H1 (cell line): ENCODE measurements at regions of chr2 and their contacts with region 1.

Region 1: DNA sequence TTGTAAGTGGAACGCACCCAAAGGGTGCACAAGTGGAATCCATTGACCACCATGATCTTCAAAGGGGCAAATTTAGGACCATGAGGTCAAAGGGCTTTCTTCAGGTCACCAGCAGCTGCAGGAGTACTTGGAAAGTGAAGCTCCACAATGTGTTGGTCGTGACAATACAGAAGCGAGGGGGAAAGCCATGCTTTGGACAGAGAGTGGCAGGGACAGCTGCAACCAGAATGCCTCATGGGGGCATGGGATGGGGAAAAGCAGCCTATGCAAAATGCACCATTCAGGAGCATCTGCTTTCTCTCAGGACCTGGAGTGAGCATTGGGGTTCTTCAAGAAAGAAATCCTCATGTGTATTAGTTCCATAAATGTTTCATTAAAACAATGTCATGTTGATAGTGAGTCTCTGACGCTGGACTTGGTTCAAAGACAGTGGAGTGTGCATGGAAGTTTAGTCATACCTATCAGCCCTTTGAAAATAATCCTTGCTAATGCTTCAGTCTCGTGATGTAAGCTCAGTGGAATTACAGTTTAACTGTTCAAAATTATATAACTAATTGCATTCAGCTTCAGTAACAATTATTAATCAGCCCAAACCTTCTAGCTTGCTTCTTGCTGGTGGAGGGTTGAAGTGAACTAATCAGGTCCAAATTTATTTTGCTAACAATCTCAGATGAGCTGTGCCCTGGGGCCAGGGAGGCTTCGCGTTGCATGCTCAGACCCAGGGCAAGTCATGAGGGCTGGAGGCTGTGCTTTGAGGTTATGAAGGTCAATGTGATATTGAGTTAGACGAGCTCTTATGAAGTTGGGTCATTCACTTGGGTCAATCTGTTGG is 41.6 kb downstream of the ACKR3 start:
- DNase-seq: no peak
- H3K4me3 ChIP-seq: no peak overlapping the region
- H3K27ac ChIP-seq: no peak overlapping the region
- H3K4me1 ChIP-seq: peaks cover 0 to 3% (median 0%) of the 10 kb centered on the region in 4 experiments; a peak in 1 of 7 replicates
- H3K27me3 ChIP-seq: peaks cover 0 to 3% (median 0%) of the 10 kb centered on the region in 4 experiments; a peak in 1 of 7 replicates
- CTCF ChIP-seq: no peak
- EP300 ChIP-seq: no peak
- POLR2A ChIP-seq: no peak
- RAD21 ChIP-seq: no peak

Region 2: DNA sequence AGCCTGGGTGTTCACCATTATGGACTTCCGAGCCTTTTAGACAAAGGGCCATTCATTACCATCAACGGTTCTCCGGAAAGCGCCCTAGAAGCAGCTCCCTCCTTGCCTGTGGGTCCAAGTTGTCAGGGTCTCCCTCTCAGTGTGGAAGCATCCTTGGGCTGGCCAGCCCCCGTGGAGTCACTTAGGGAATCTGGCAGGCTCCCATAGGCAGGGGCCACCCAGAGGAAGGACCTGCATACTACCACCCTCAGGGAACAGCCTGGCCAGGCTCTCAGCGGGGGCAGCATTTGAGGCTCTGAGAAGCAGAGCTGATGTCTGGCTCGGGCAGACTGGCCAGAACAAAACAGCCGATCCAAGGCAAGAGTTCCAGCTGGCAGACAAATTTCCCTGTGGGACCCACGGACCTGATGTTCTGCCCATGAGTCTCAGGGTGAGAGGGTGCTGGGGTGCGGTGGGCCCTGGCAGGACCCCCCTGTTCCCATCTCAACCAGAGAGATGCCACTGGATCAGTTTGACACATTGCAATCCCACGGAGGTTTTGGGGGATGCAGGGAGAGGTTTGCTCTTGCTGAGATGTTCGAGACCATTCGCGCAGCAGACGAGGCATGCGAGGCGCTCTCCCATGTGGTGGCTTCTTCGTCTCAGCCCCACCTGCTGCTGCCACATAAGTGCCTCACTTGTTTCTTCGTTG is 15.3 kb after region 1 on chr2:
- CTCF ChIA-PET with region 1: interaction called, 35 read pairs
- POLR2A ChIA-PET with region 1: no interaction called
- DNase-seq: no peak
- H3K4me3 ChIP-seq: no peak overlapping the region
- H3K27ac ChIP-seq: no peak overlapping the region
- H3K4me1 ChIP-seq: peaks cover 0 to 3% (median under 1%) of the 10 kb centered on the region in 4 experiments; a peak in 2 of 7 replicates
- H3K27me3 ChIP-seq: no peaks in the 10 kb centered on the region; a peak in 1 of 7 replicates
- CTCF ChIP-seq: no peak
- EP300 ChIP-seq: no peak
- POLR2A ChIP-seq: no peak
- RAD21 ChIP-seq: peak in 1 of 2 experiments; percentile 2; a peak in 1 of 4 replicates

Region 3: DNA sequence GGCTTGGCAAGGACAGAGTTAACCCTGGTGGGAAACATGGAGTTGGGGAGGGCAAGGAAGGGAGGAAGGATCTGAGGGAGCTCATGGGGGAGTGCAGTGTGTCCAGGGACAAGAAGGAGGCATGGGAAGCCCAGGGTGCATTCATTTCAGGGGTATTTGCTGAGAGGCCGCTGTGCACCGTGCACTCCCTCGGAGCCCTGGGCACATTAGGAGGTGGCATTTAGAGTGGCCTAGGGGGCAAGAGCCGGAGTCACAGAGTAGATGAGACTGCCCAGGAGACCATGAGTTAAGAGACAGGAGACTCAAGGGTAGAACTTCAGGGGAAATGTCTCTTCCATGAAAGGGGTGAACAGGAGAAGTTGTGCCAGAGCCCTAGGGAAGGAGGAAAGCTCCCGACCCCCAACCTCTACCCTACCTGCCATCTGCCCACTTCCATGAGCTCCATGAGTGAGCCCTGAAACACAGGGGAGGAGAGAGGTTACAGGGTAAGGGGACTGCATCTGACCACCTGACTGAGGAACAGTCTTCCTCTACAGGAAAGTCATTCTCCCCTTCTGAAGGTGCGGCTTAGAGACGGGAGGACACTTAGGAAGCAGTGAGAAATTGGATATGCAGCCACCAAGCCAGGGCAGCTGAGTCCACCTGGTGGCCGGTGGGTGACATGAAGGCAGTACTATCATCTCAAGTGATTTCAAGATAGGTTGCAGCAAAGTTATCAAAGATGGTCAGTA is 415.9 kb after region 1 on chr2:
- CTCF ChIA-PET with region 1: interaction called, 10 read pairs
- POLR2A ChIA-PET with region 1: no interaction called
- DNase-seq: peak; percentile 29 to 74
- H3K4me3 ChIP-seq: no peak overlapping the region
- H3K27ac ChIP-seq: no peak overlapping the region
- H3K4me1 ChIP-seq: no peaks in the 10 kb centered on the region
- H3K27me3 ChIP-seq: no peaks in the 10 kb centered on the region; a peak in 2 of 7 replicates
- CTCF ChIP-seq: peak; percentile 82 to 97 (median 82)
- EP300 ChIP-seq: no peak
- POLR2A ChIP-seq: no peak
- RAD21 ChIP-seq: peak; percentile 99 to 100